ENCODE measurements at regions of chr6 and their contacts with region 1.

Region 1: DNA sequence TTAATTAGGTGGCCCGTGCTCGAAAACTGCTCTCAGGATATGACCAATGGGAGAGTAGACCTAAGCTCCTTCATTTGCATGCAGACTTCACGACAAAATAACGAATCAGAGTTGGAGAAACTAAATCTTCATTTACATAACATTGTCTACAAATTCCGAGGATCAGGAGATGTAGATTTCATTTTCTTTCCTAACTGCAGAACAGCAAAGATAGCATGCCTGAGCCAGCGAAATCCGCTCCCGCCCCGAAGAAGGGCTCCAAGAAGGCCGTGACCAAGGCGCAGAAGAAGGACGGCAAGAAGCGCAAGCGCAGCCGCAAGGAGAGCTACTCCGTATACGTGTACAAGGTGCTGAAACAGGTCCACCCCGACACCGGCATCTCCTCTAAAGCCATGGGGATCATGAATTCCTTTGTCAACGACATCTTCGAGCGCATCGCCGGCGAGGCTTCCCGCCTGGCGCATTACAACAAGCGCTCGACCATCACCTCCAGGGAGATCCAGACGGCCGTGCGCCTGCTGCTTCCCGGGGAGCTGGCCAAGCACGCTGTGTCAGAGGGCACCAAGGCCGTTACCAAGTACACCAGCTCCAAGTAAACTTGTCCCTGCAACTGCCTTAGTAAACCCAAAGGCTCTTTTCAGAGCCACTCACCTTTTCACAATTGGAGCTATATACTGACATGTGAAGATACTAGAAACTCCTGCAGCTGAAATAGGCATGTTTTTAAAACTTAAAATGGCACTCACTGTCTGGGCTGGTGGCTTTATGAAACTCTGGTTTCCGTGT is 96.5 kb downstream of the HFE start:
- DNase-seq: peak; percentile 39 to 75 (median 66)
- H3K4me3 ChIP-seq: peak overlapping the region; percentile 34 to 81 (median 64)
- H3K27ac ChIP-seq: peak overlapping the region in 57 of 59 donors; percentile 2 to 90 (median 81)
- H3K27me3 ChIP-seq: peaks cover 0 to 6% (median 0%) of the 10 kb centered on the region in 45 donors
- CTCF ChIP-seq: no peak

Region 2: GRCh38 chr6:26129656-26130055 is 54.1 kb before region 1 on chr6:
- intact Hi-C with region 1: loop called in 1 of 2 experiments (anchors 2 kb)
- DNase-seq: no peak
- H3K4me3 ChIP-seq: peak overlapping the region in 4 of 59 donors; percentile 5 to 96 (median 52)
- H3K27ac ChIP-seq: peak overlapping the region in 6 of 59 donors; percentile 1 to 38 (median 6)
- H3K27me3 ChIP-seq: no peaks in the 10 kb centered on the region
- CTCF ChIP-seq: no peak

Region 3: DNA sequence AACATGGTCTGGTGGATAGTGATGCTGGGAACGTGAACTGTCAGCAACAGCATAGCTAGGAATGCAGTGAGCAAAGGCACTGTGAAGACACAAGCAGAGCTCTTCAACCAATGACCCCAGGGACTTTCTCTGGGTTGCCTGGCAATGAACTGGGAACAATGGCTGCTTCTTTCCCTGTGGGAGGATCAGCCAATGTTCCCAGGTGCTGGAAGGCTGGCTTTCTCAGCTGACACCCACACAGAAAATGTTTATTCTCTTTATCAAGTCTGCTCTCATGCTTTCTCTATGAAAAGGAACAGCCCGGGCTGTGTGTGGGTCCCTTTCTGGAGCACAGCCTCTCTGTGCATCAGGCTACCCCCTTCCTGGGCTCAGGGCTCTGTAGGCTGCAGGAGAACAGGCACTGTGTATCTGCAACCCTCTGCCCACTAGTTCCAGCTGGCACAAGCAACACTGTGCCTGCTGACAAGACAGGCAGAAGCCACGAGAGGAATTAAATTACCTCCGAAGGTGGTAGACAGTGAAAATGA is 42.3 kb before region 1 on chr6:
- intact Hi-C with region 1: no loop called
- DNase-seq: peak in 9 of 10 donors; percentile 42 to 89 (median 78)
- H3K4me3 ChIP-seq: peak overlapping the region in 34 of 59 donors; percentile 0 to 52 (median 21)
- H3K27ac ChIP-seq: peak overlapping the region; percentile 67 to 97 (median 91)
- H3K27me3 ChIP-seq: no peaks in the 10 kb centered on the region
- CTCF ChIP-seq: no peak